ENCODE measurements at regions of chr16 and their contacts with region 1.

Region 1: GRCh38 chr16:30813821-30814189 is 26.8 kb upstream of the ZNF629 start:
- DNase-seq: no peak
- ATAC-seq: no peak
- H3K4me3 ChIP-seq: peak overlapping the region; percentile 41
- H3K27ac ChIP-seq: peak overlapping the region; percentile 69
- H3K4me1 ChIP-seq: peaks cover 16% of the 10 kb centered on the region in 2 experiments
- H3K27me3 ChIP-seq: no peaks in the 10 kb centered on the region
- CTCF ChIP-seq: no peak
- EP300 ChIP-seq: no peak
- POLR2A ChIP-seq: no peak
- RAD21 ChIP-seq: no peak

Region 2: DNA sequence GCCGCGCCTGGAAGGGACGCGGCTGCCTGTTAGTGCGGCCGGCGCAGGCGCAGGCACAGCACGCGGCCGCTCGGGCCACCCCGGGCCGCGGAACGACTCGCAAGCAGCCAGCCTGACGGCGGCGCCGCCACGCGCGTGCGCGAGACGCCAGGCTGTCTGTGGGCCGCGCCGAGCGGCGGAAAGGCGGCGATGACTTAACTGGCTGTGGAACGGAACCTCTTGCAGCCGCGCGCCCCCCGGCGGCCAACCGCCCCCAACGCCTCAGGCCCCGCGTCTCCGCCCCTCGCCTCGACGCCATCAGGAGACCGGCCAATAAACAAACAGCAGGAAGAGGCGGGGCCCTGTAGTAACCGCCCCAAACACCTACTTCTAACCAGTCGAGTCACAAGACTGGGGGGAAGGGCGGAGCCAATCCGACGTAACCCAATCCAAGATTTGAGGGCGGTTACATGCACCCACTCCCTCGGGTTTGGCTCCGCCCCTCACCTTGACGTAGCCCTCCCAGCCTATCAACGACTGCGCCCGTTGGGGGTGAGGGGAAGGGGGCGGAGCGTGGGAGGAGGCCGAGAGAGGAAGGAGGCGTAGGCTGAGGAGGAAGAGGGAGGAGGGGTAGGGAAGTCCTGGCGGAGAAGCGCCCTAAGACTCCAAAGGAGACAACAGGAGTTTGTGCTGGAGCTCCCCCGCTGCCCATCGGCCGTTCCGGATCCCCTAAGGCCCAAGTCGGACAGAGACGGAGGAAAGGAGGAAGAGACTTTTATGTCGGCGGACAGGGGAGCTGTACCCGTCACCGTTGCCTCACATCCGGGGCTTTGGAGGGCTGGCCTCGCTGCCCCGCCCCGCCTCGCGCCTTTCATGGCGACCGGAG is 155.7 kb before region 1 on chr16 and contains the start of gene FBRS:
- CTCF ChIA-PET with region 1: interaction called, 5 read pairs
- POLR2A ChIA-PET with region 1: no interaction called
- in situ Hi-C with region 1: no loop called
- intact Hi-C with region 1: loop called (anchors 10 kb)
- DNase-seq: peak; percentile 93 to 100 (median 96)
- ATAC-seq: peak; percentile 88
- H3K4me3 ChIP-seq: peak within 1 kb of the TSS; percentile 90
- H3K27ac ChIP-seq: peak within 1 kb of the TSS; percentile 99
- H3K4me1 ChIP-seq: peaks cover 20 to 52% of the 10 kb centered on the region in 2 experiments; a peak in 4 of 5 replicates
- H3K27me3 ChIP-seq: no peaks in the 10 kb centered on the region
- CTCF ChIP-seq: peak; percentile 90 to 97 (median 90)
- EP300 ChIP-seq: no peak
- POLR2A ChIP-seq: peak; percentile 95
- RAD21 ChIP-seq: peak; percentile 78 to 82
- polyA plus RNA-seq, gene FBRS: 0.32 to 0.46 TPM

Region 3: GRCh38 chr16:30761928-30762810 is 51.6 kb before region 1 on chr16 and contains the starts of genes CFAP119 and RNF40:
- CTCF ChIA-PET with region 1: no interaction called
- POLR2A ChIA-PET with region 1: no interaction called
- in situ Hi-C with region 1: no loop called
- intact Hi-C with region 1: loop called (anchors 5 kb)
- DNase-seq: peak; percentile 96 to 100 (median 98)
- ATAC-seq: peak; percentile 94
- H3K4me3 ChIP-seq: peak within 1 kb of the TSS; percentile 88
- H3K27ac ChIP-seq: peak within 1 kb of the TSS; percentile 87
- H3K4me1 ChIP-seq: peaks cover 19 to 51% of the 10 kb centered on the region in 2 experiments; a peak in 4 of 5 replicates
- H3K27me3 ChIP-seq: no peaks in the 10 kb centered on the region
- CTCF ChIP-seq: no peak
- EP300 ChIP-seq: no peak
- POLR2A ChIP-seq: peak; percentile 86
- RAD21 ChIP-seq: no peak
- polyA plus RNA-seq, gene CFAP119: 5.5 to 6.2 TPM
- polyA plus RNA-seq, gene RNF40: 6.2 to 9.1 TPM